Gastrocnemius medialis (tissue), 4 donors: ENCODE measurements at regions of chr18 and their contacts with region 1.

Region 1: DNA sequence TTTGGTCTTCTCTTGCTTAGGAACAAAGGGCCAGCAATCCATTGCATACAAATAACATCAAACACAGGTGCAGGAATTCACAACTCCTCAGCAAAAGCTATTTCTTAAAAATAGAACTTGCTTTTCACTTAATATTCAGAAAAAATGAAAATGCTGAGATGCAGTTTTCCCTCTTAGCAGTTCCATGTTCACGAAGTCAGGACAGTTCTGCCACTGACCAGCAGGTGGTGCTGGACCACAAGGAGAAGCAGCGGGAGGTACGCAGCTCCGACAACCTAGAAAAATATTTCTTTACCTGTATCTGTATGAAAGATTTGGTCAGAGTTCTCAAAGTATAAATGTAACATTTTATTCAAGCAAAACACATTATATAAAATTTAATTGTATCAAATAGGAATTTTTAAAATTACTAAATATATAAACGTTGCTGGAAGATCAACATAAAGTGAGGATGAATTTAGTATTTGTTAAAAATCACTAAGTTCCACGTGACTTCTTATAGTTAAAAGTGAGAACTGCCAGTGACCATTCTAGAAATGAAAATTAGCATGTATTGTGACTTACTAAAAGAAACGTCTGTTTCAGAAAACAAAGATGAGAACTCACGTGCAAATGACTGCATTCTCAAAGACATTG is 48.8 kb downstream of the ADNP2 start:
- DNase-seq: peak; percentile 39 to 56
- ATAC-seq: peak; percentile 45 to 70
- H3K4me3 ChIP-seq: no peak overlapping the region
- H3K27ac ChIP-seq: no peak overlapping the region
- H3K4me1 ChIP-seq: no peaks in the 10 kb centered on the region
- H3K27me3 ChIP-seq: no peaks in the 10 kb centered on the region
- CTCF ChIP-seq: peak; percentile 77 to 97 (median 80)
- POLR2A ChIP-seq: no peak

Region 2: DNA sequence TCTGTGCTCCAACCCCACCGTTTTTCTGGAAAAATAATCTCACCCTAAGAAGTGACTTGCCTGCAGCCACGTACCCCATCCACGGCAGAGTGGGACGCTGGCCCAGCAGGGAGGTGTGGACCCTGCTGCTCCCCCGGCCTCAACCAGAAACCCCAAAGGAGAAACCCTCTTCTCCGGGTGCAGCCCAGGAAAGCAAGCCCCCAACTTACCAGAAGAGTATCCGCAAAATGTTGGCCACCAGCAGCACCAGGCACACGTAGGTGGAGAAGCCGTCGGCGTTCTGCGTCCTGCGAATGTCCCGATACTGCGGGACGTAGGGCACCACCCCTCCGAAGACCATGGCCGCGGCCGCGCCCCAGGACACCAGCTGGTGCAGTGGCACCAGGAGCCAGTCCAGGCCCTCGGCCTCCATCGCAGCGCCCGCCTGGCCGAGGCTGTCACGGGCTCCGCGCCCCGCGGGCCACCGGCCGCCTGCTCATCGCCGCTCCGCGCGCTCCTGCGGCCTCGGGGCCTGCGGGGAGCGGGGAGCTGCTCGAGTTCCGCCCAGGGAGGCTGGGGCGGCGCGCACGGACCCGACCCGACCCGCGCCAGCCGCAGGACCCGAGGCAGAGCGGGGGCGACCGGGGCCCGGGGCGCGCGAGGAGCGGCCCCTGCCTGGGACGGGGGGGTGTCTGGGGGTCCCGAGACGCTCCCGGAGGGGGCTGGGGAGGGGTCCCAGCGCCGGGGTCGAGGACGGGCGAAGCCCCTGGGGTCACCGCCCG is 207.1 kb before region 1 on chr18:
- in situ Hi-C with region 1: no loop called
- intact Hi-C with region 1: no loop called
- DNase-seq: no peak
- ATAC-seq: peak; percentile 10 to 30
- H3K4me3 ChIP-seq: peak overlapping the region; percentile 75 to 97 (median 92)
- H3K27ac ChIP-seq: peak overlapping the region; percentile 88 to 96 (median 92)
- H3K4me1 ChIP-seq: peaks cover 39 to 53% of the 10 kb centered on the region in 2 donors
- H3K27me3 ChIP-seq: no peaks in the 10 kb centered on the region
- CTCF ChIP-seq: no peak
- POLR2A ChIP-seq: no peak

Region 3: GRCh38 chr18:80086281-80086680 is 71.5 kb before region 1 on chr18:
- in situ Hi-C with region 1: no loop called
- intact Hi-C with region 1: no loop called
- DNase-seq: no peak
- ATAC-seq: no peak
- H3K4me3 ChIP-seq: no peak overlapping the region
- H3K27ac ChIP-seq: no peak overlapping the region
- H3K4me1 ChIP-seq: no peaks in the 10 kb centered on the region
- H3K27me3 ChIP-seq: no peaks in the 10 kb centered on the region
- CTCF ChIP-seq: no peak
- POLR2A ChIP-seq: no peak

Region 4: DNA sequence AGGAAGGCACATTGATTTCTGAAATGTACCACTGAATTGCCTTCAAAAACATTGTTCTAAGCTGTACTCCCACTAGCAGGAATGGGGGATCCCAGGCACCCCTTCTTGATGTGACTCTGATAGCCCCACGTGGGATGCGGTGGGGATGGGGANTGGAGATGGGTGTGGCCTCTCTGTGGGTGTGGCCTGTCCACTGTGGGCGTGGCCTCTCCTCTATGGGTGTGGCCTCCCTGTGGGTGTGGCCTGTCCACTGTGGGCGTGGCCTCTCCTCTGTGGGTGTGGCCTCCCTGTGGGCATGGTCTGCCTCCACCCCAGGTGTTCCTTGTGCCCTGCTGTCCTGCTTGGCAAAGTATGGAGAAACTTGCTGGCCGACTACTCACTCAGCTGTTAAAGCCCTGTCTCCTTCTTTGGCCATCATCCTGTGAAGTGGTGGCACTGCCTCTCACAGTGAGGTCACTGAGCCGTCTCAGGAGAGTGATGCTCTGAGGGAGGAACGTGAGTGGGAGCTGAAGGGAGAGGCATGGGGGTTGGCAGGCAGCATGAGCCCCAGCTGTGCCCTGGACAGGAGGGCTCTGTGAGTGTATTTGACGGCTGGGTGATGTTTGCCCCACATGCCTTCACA is 96.2 kb after region 1 on chr18:
- in situ Hi-C with region 1: no loop called
- intact Hi-C with region 1: loop called (anchors 1 kb)
- DNase-seq: no peak
- ATAC-seq: peak; percentile 27 to 35
- H3K4me3 ChIP-seq: no peak overlapping the region
- H3K27ac ChIP-seq: no peak overlapping the region
- H3K4me1 ChIP-seq: peaks cover 0 to 8% of the 10 kb centered on the region in 2 donors
- H3K27me3 ChIP-seq: no peaks in the 10 kb centered on the region
- CTCF ChIP-seq: no peak
- POLR2A ChIP-seq: no peak